CD8-positive, alpha-beta memory T cell (primary cell): ENCODE measurements at regions of chr1 and their contacts with region 1.

Region 1: DNA sequence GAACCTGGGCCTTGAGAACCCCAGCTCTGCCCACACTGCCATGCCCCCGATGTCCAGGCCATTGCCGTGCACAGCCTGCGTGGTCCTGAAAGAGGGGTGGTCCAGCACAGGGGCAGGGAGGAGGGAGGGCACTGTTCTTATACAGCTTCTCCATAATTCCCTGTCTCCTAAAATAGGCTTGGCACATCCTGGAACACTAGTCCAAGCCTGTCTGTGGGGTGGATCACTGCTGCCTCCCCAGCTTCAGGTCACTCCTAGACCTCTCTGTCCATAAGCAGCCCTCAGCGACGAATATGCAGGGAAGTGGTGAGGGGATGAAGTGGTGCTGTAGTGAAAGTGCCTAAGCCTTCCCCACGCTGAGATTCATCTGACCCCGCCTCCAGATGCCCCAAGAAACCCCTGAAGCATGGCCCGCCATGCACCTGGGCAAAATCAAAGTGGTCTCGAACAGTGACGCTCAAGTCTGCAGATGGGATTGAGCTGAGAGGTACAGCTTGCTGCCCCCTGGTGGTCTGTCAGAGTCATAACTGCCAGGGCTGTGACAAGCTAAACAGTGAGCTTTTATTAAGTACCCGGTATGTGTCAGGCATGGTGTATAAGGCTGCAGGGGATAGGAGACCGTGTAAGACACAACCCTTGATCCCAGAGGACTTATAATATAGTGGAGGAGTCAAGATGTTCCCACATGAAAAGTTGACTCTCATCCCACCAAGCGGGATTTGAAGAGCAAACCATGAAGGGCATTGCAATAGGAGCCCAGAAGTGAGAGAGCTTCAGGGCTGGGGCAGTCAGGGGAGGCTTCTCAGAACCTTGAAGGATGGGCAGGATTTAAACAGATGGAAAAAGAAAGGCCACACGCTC is 66.6 kb downstream of the FAM163A start:
- DNase-seq: peak; percentile 48 to 74 (median 64)
- H3K4me3 ChIP-seq: no peak overlapping the region
- H3K4me3 Mint-ChIP-seq: peak overlapping the region in 2 of 7 donors; percentile 7 to 30
- H3K27ac ChIP-seq: no peak overlapping the region
- H3K27ac Mint-ChIP-seq: peak overlapping the region in 2 of 8 donors; percentile 19 to 69
- H3K4me1 ChIP-seq: peaks cover 10% of the 10 kb centered on the region
- H3K4me1 Mint-ChIP-seq: peaks cover 5 to 8% (median 6%) of the 10 kb centered on the region in 3 donors
- H3K27me3 ChIP-seq: no peaks in the 10 kb centered on the region
- H3K27me3 Mint-ChIP-seq: peaks cover 11 to 23% of the 10 kb centered on the region in 2 donors

Region 2: DNA sequence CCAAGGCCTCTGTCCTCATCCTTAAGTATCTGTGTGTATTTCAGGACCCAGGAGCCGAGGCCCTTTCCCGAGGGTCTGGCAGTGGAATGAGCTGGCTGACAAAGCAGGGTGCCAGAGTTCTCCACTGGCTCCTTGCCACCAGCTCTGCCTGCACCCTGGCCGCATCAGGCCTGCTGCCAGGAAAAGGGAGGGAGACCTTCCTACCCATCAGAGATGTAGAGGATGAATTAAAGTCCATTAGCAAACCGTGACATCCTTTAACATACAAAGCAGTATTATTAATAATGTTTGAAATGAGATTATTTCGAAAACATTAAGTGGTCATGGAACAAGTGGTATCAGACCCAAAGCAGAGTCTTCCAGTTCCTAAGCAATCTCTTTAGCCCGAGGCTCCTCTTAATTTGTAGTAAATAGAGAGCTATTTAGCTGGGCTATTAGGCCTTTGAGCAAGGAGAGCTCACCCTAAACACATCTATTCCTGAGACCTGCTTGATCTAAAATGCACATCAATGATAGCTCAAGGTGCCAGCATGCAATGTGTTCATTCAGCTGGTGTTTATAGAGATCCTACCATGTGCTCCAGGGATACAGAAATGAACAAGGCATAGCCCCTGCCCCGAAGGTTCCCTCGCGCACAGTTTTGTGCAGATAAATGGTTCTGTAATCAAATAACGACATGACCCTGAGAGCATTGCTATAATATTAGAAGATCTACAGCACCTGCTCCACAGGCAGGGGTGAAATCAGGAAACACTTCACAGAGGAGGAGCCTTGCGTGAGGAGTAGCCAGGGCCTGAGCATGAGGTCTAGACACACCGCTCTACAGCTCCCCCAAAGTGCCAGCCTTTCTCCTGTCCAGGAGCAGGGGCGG is 22.7 kb before region 1 on chr1:
- CTCF ChIA-PET with region 1: interaction called, 20 read pairs
- POLR2A ChIA-PET with region 1: no interaction called
- DNase-seq: no peak
- H3K4me3 ChIP-seq: no peak overlapping the region
- H3K4me3 Mint-ChIP-seq: no peak overlapping the region
- H3K27ac ChIP-seq: no peak overlapping the region
- H3K27ac Mint-ChIP-seq: no peak overlapping the region
- H3K4me1 ChIP-seq: no peaks in the 10 kb centered on the region
- H3K4me1 Mint-ChIP-seq: no peaks in the 10 kb centered on the region
- H3K27me3 ChIP-seq: peaks cover 4% of the 10 kb centered on the region
- H3K27me3 Mint-ChIP-seq: peaks cover 10 to 35% of the 10 kb centered on the region in 2 donors

Region 3: GRCh38 chr1:179798864-179799516 is 10.7 kb before region 1 on chr1:
- CTCF ChIA-PET with region 1: interaction called, 20 read pairs
- POLR2A ChIA-PET with region 1: no interaction called
- DNase-seq: no peak
- H3K4me3 ChIP-seq: no peak overlapping the region
- H3K4me3 Mint-ChIP-seq: no peak overlapping the region
- H3K27ac ChIP-seq: no peak overlapping the region
- H3K27ac Mint-ChIP-seq: no peak overlapping the region
- H3K4me1 ChIP-seq: no peaks in the 10 kb centered on the region
- H3K4me1 Mint-ChIP-seq: no peaks in the 10 kb centered on the region
- H3K27me3 ChIP-seq: no peaks in the 10 kb centered on the region
- H3K27me3 Mint-ChIP-seq: peaks cover 0 to 6% of the 10 kb centered on the region in 2 donors

Region 4: GRCh38 chr1:179840107-179840506 is 30.4 kb after region 1 on chr1:
- CTCF ChIA-PET with region 1: interaction called, 12 read pairs
- POLR2A ChIA-PET with region 1: no interaction called
- DNase-seq: no peak
- H3K4me3 ChIP-seq: no peak overlapping the region
- H3K4me3 Mint-ChIP-seq: no peak overlapping the region
- H3K27ac ChIP-seq: no peak overlapping the region
- H3K27ac Mint-ChIP-seq: no peak overlapping the region
- H3K4me1 ChIP-seq: no peaks in the 10 kb centered on the region
- H3K4me1 Mint-ChIP-seq: peaks cover 0 to 7% (median 4%) of the 10 kb centered on the region in 3 donors
- H3K27me3 ChIP-seq: no peaks in the 10 kb centered on the region
- H3K27me3 Mint-ChIP-seq: no peaks in the 10 kb centered on the region